Activated B cell treated with CpG ODN at 0.5 μM for 24 hours (primary cell): ENCODE measurements at regions of chr3 and their contacts with region 1.

Region 1: GRCh38 chr3:46276502-46277099 is 34.3 kb downstream of the CCR3 start:
- DNase-seq: peak; percentile 65
- ATAC-seq: peak; percentile 99
- H3K4me3 Mint-ChIP-seq: no peak overlapping the region
- H3K27ac Mint-ChIP-seq: no peak overlapping the region
- H3K4me1 Mint-ChIP-seq: peaks cover 4% of the 10 kb centered on the region
- H3K27me3 Mint-ChIP-seq: no peaks in the 10 kb centered on the region
- CTCF ChIP-seq: peak; percentile 19

Region 2: GRCh38 chr3:45631486-45631885 is 645.1 kb before region 1 on chr3:
- CTCF ChIA-PET with region 1: no interaction called
- POLR2A ChIA-PET with region 1: no interaction called
- intact Hi-C with region 1: no loop called
- DNase-seq: no peak
- ATAC-seq: peak; percentile 61
- H3K4me3 Mint-ChIP-seq: peak overlapping the region; percentile 6
- H3K27ac Mint-ChIP-seq: peak overlapping the region; percentile 89
- H3K4me1 Mint-ChIP-seq: peaks cover 50% of the 10 kb centered on the region
- H3K27me3 Mint-ChIP-seq: no peaks in the 10 kb centered on the region
- CTCF ChIP-seq: no peak

Region 3: DNA sequence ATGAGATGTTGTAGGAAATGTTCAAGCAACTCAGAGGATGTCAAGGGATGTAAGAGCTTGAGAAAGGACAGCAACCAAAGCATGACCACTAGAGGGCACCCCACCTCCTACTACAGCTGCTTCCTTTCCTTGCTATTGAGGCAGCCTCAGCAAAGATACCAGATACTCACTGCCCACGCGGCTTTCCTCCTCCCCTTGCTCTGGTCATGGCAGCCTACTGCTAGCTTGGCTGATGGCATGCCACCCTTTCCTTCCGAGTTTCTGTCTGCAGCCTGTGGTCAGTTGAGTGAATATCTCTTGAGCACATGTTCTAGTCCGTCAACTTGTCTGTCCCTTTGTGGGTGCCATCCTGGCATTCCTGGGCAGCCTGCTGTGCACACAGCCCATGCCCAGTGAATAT is 337.7 kb before region 1 on chr3:
- CTCF ChIA-PET with region 1: interaction called, 3 read pairs
- POLR2A ChIA-PET with region 1: no interaction called
- intact Hi-C with region 1: loop called (anchors 5 kb)
- DNase-seq: peak; percentile 55
- ATAC-seq: peak; percentile 86
- H3K4me3 Mint-ChIP-seq: no peak overlapping the region
- H3K27ac Mint-ChIP-seq: no peak overlapping the region
- H3K4me1 Mint-ChIP-seq: peaks cover 5% of the 10 kb centered on the region
- H3K27me3 Mint-ChIP-seq: no peaks in the 10 kb centered on the region
- CTCF ChIP-seq: peak; percentile 68

Region 4: DNA sequence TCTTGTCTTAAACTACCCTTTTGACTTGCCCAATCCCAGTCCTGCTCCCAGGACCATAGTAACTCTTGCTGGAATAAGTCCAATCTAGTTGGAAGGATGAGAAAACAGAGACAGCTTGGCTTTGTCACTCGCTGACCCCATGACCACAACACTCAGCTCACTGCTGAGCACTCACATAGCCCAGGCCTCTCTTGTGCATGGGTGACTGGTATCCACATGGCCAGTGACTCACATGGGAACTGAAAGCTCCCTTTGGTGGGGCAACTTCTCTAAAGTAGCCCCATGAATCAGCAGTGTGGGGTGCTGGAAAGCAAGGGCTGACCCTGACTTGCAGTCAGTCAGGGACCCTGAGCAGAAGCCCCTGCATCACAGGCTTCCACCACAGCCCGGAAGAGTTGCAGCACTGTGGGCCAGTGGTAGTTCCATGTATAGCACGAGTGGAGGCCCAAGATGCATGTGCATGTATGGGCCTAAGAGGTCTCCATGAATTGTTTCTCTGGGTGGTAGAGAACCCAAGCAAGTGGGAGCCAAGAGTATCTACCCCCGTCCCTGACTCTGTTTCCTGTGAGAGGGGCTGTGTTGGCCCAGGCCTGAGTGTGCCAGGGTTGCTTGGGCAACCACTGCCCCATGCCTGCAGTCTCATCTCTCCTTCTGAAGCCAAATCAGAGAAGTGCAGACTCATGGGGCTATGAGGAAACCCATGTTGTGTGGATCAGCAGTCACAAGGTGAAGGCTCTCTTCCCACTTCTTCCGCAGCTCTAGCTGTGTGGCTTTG is 187.2 kb before region 1 on chr3:
- CTCF ChIA-PET with region 1: interaction called, 3 read pairs
- POLR2A ChIA-PET with region 1: no interaction called
- intact Hi-C with region 1: loop called (anchors 10 kb)
- DNase-seq: no peak
- ATAC-seq: peak; percentile 78
- H3K4me3 Mint-ChIP-seq: no peak overlapping the region
- H3K27ac Mint-ChIP-seq: no peak overlapping the region
- H3K4me1 Mint-ChIP-seq: peaks cover 62% of the 10 kb centered on the region
- H3K27me3 Mint-ChIP-seq: no peaks in the 10 kb centered on the region
- CTCF ChIP-seq: no peak

Region 5: GRCh38 chr3:46368569-46368968 is 92.0 kb after region 1 on chr3:
- CTCF ChIA-PET with region 1: interaction called, 129 read pairs
- POLR2A ChIA-PET with region 1: interaction called, 5 read pairs
- intact Hi-C with region 1: loop called (anchors 1 kb)
- DNase-seq: peak; percentile 33
- ATAC-seq: peak; percentile 91
- H3K4me3 Mint-ChIP-seq: peak overlapping the region; percentile 7
- H3K27ac Mint-ChIP-seq: no peak overlapping the region
- H3K4me1 Mint-ChIP-seq: peaks cover 34% of the 10 kb centered on the region
- H3K27me3 Mint-ChIP-seq: peaks cover 2% of the 10 kb centered on the region
- CTCF ChIP-seq: no peak

Region 6: DNA sequence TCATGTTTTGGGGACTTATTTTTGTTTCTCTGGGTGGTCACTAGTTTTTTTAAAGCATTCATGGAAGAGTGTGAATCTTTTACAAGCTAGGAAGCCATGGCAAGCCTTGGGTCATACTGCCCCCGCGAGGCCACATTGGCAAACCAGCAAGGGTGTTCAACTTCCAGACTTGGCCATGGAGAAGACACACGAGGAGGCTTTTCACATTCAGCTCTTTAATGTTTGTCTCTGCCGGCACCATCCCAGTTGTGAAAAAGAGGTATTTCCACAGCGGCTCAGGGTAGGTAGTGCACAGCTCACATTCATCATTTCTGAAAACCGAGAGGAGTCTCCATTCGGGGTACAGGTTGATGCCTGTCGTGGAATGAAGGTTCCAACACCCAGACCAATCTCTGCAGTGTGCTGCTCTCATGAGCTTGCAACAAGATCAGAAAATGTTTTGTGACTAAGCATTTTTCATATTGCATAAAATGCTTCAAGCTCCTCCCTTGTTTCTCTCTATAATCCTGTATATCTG is 101.9 kb after region 1 on chr3:
- CTCF ChIA-PET with region 1: interaction called, 31 read pairs
- POLR2A ChIA-PET with region 1: no interaction called
- intact Hi-C with region 1: no loop called
- DNase-seq: peak; percentile 42
- ATAC-seq: peak; percentile 40
- H3K4me3 Mint-ChIP-seq: no peak overlapping the region
- H3K27ac Mint-ChIP-seq: no peak overlapping the region
- H3K4me1 Mint-ChIP-seq: peaks cover 43% of the 10 kb centered on the region
- H3K27me3 Mint-ChIP-seq: no peaks in the 10 kb centered on the region
- CTCF ChIP-seq: no peak

Region 7: GRCh38 chr3:46393554-46393953 is 117.0 kb after region 1 on chr3:
- CTCF ChIA-PET with region 1: no interaction called
- POLR2A ChIA-PET with region 1: no interaction called
- intact Hi-C with region 1: no loop called
- DNase-seq: no peak
- ATAC-seq: no peak
- H3K4me3 Mint-ChIP-seq: no peak overlapping the region
- H3K27ac Mint-ChIP-seq: no peak overlapping the region
- H3K4me1 Mint-ChIP-seq: peaks cover 17% of the 10 kb centered on the region
- H3K27me3 Mint-ChIP-seq: no peaks in the 10 kb centered on the region
- CTCF ChIP-seq: no peak

Region 8: DNA sequence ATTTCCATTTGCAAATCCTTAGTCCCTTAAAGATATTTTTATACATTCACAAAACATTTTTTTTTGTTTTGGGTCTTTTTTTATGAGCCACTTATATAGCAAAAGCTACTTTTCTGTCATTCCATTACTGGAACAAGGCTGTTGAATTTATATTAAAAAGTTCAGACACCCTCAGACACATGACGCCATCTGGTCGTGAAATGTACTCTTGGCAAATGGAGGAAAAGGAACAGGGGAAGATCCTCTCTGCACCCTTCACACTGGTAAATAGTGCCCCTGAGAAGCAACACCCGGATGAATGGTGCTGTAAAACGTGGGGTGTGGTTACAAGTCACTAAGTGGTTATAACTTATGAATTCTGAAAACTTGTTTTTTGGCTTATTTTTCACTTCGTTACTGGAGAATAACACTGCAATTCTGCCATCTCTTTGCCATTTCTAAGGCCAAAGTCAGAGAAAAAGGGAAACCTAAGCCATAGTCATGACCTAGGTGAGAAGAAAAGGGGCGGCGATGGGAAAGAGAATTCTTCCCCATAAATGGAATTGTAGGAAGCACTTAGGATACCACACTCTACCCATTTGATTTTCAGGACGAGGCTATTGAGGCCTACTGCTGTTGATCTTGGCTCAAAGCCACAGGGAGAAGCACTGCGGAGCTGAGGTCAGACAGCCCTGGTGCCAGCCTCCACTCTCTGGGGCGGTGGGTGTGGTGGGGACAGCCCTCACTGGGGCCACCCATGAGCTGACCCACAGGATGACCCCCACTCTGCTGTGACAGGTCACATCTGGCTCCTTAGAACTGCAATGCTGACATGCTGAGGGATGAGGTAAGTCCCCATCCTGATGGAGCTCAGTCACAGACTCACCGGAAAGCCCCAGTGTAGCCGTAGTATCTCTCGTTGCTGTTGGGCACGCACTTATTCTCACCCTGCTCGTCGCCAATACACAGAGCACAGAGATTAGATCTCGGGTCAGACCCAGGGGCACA is 166.3 kb after region 1 on chr3:
- CTCF ChIA-PET with region 1: interaction called, 6 read pairs
- POLR2A ChIA-PET with region 1: no interaction called
- intact Hi-C with region 1: loop called (anchors 1 kb)
- DNase-seq: no peak
- ATAC-seq: no peak
- H3K4me3 Mint-ChIP-seq: no peak overlapping the region
- H3K27ac Mint-ChIP-seq: no peak overlapping the region
- H3K4me1 Mint-ChIP-seq: peaks cover 39% of the 10 kb centered on the region
- H3K27me3 Mint-ChIP-seq: no peaks in the 10 kb centered on the region
- CTCF ChIP-seq: no peak

Region 9: GRCh38 chr3:46558184-46559043 is 281.8 kb after region 1 on chr3:
- CTCF ChIA-PET with region 1: no interaction called
- POLR2A ChIA-PET with region 1: no interaction called
- intact Hi-C with region 1: loop called (anchors 1 kb)
- DNase-seq: peak; percentile 50
- ATAC-seq: peak; percentile 98
- H3K4me3 Mint-ChIP-seq: peak overlapping the region; percentile 61
- H3K27ac Mint-ChIP-seq: no peak overlapping the region
- H3K4me1 Mint-ChIP-seq: peaks cover 20% of the 10 kb centered on the region
- H3K27me3 Mint-ChIP-seq: peaks cover 1% of the 10 kb centered on the region
- CTCF ChIP-seq: no peak